Calu3 (cell line): ENCODE measurements at regions of chr3 and their contacts with region 1.

Region 1: GRCh38 chr3:174533286-174533685 is 325.8 kb upstream of the NAALADL2 start:
- DNase-seq: no peak
- H3K4me3 Mint-ChIP-seq: peak overlapping the region; percentile 51
- H3K27ac Mint-ChIP-seq: peak overlapping the region; percentile 83
- H3K4me1 Mint-ChIP-seq: peaks cover 41% of the 10 kb centered on the region
- H3K27me3 Mint-ChIP-seq: no peaks in the 10 kb centered on the region
- CTCF ChIP-seq: no peak

Region 2: DNA sequence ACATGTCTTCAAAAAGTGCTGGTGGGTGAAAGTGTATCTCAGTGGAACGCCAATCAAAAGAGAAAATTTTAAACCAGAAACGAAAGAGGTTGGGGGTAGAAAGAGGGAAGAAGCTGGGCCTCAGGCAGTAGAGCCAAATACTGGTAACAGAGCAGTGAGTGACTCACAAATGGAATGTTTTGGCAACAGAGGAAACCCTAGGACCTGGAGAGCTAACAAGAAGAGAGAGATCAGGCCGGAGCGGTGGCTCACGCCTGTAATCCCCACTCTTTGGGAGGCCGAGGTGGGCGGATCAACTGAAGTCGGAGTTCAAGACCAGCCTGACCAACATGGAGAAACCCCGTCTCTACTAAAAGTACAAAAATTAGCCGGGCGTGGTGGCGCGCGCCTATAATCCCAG is 125.0 kb before region 1 on chr3:
- CTCF ChIA-PET with region 1: no interaction called
- intact Hi-C with region 1: loop called (anchors 5 kb)
- DNase-seq: no peak
- H3K4me3 Mint-ChIP-seq: no peak overlapping the region
- H3K27ac Mint-ChIP-seq: no peak overlapping the region
- H3K4me1 Mint-ChIP-seq: peaks cover 35% of the 10 kb centered on the region
- H3K27me3 Mint-ChIP-seq: no peaks in the 10 kb centered on the region
- CTCF ChIP-seq: no peak

Region 3: DNA sequence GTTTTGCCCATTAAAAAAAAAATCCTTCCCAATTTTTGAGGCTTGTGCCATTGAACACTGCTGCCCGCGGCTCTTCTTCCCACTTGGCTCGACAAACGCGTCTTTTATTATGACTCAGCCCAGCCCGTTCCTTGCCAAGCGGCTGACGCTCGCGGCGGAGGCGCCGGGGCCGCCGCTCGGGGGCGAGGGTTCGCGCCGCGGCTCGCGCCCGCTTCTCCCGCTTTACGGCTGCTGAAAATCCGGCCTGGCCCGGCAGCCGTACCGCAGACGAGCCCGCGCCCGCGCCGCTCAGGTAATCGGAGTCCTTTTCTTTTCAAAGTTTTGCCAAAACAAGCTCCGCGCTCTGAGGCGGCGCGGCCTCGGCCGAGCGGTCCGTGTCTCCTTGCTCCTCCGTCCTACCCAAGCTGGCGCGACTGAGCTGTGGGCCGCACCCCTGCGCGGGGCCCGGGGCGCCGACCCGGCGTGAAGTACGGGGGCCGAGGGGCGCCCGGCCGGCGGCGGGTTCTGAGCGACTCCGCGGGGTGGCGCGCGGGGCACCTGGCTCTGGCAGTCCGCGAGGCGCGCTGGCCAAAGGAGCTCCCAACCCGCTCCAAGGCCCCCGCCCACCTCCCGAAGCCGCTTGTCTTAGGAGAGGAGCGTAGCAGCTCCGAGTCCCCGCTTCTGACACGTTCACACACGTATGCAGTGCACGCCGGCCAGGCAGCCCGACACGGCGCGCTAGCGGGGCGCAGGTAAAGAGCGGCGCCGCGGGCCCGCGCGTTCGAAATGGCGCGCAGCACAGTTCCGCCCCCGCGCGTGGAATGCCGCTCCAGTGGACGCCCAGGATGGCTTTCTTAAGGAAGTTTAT is 92.3 kb before region 1 on chr3:
- CTCF ChIA-PET with region 1: no interaction called
- intact Hi-C with region 1: loop called (anchors 1 kb)
- DNase-seq: peak; percentile 94
- H3K4me3 Mint-ChIP-seq: peak overlapping the region; percentile 80
- H3K27ac Mint-ChIP-seq: peak overlapping the region; percentile 62
- H3K4me1 Mint-ChIP-seq: peaks cover 20% of the 10 kb centered on the region
- H3K27me3 Mint-ChIP-seq: no peaks in the 10 kb centered on the region
- CTCF ChIP-seq: peak; percentile 18

Region 4: GRCh38 chr3:174620138-174620537 is 86.9 kb after region 1 on chr3:
- CTCF ChIA-PET with region 1: no interaction called
- intact Hi-C with region 1: loop called (anchors 1 kb)
- DNase-seq: no peak
- H3K4me3 Mint-ChIP-seq: no peak overlapping the region
- H3K27ac Mint-ChIP-seq: no peak overlapping the region
- H3K4me1 Mint-ChIP-seq: no peaks in the 10 kb centered on the region
- H3K27me3 Mint-ChIP-seq: no peaks in the 10 kb centered on the region
- CTCF ChIP-seq: no peak

Region 5: DNA sequence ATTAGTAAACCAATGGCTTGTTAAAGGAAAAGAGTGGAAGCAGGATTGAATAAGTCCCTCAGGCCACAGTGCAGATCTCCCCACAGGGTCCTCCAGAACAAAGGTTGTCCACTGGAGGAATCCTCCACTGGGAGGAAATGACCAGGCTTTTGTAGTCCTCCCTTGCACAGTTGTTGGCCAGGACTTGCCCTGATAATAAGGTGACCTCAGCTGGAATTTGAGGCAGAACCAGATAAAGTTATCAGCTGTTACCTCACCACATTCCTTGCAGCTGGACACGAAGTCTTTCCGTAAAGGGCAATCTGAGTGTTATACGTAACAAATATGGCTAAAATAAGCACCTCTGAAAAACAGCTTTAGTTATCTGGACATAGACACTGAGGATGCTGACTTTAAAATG is 242.3 kb after region 1 on chr3:
- CTCF ChIA-PET with region 1: no interaction called
- intact Hi-C with region 1: loop called (anchors 5 kb)
- DNase-seq: peak; percentile 26
- H3K4me3 Mint-ChIP-seq: no peak overlapping the region
- H3K27ac Mint-ChIP-seq: no peak overlapping the region
- H3K4me1 Mint-ChIP-seq: peaks cover 21% of the 10 kb centered on the region
- H3K27me3 Mint-ChIP-seq: no peaks in the 10 kb centered on the region
- CTCF ChIP-seq: no peak

Region 6: DNA sequence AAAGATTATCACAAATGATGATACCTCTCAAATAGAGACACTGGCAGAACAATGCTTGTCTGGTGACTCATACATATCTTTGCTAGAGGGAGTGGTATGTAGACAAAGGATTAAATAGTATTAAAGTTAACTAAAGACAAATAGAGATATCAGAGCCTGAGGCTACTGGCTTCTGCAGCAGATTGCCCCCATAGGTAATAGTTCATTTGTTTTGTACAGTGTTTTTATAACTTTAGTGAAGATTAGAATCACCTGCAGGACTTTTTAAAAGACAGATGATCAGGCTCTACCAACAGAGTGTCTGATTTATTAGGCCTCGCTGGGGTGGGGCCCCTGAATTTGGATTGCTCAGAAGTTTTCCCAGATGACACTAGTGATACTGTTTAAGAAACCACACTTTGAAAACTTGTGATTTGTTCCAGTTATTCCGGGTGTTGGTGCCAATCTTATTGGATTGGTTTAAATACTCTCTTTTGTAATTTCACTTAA is 422.3 kb after region 1 on chr3:
- CTCF ChIA-PET with region 1: no interaction called
- intact Hi-C with region 1: loop called (anchors 5 kb)
- DNase-seq: no peak
- H3K4me3 Mint-ChIP-seq: no peak overlapping the region
- H3K27ac Mint-ChIP-seq: peak overlapping the region; percentile 89
- H3K4me1 Mint-ChIP-seq: peaks cover 86% of the 10 kb centered on the region
- H3K27me3 Mint-ChIP-seq: no peaks in the 10 kb centered on the region
- CTCF ChIP-seq: no peak

Region 7: GRCh38 chr3:175073235-175073905 is 540.1 kb after region 1 on chr3:
- CTCF ChIA-PET with region 1: no interaction called
- intact Hi-C with region 1: loop called (anchors 10 kb)
- DNase-seq: no peak
- H3K4me3 Mint-ChIP-seq: no peak overlapping the region
- H3K27ac Mint-ChIP-seq: peak overlapping the region; percentile 47
- H3K4me1 Mint-ChIP-seq: peaks cover 33% of the 10 kb centered on the region
- H3K27me3 Mint-ChIP-seq: no peaks in the 10 kb centered on the region
- CTCF ChIP-seq: no peak